PC-9 (cell line): ENCODE measurements at regions of chr11 and their contacts with region 1.

Region 1: GRCh38 chr11:86208572-86208971 is 36.0 kb upstream of the EED start:
- DNase-seq: no peak
- H3K4me3 ChIP-seq: no peak overlapping the region
- H3K27ac ChIP-seq: no peak overlapping the region
- H3K4me1 ChIP-seq: 0 out of 2 replicates have a peak, but pooled peaks cover 5% of the 10 kb centered on the region
- H3K27me3 ChIP-seq: no peaks in the 10 kb centered on the region
- CTCF ChIP-seq: no peak

Region 2: GRCh38 chr11:86174101-86175046 is 34.2 kb before region 1 on chr11:
- CTCF ChIA-PET with region 1: no interaction called
- POLR2A ChIA-PET with region 1: interaction called, 15 read pairs
- intact Hi-C with region 1: no loop called
- DNase-seq: peak; percentile 80 to 98
- H3K4me3 ChIP-seq: no peak overlapping the region
- H3K27ac ChIP-seq: peak overlapping the region; percentile 79
- H3K4me1 ChIP-seq: peaks cover 62% of the 10 kb centered on the region
- H3K27me3 ChIP-seq: no peaks in the 10 kb centered on the region
- CTCF ChIP-seq: no peak

Region 3: DNA sequence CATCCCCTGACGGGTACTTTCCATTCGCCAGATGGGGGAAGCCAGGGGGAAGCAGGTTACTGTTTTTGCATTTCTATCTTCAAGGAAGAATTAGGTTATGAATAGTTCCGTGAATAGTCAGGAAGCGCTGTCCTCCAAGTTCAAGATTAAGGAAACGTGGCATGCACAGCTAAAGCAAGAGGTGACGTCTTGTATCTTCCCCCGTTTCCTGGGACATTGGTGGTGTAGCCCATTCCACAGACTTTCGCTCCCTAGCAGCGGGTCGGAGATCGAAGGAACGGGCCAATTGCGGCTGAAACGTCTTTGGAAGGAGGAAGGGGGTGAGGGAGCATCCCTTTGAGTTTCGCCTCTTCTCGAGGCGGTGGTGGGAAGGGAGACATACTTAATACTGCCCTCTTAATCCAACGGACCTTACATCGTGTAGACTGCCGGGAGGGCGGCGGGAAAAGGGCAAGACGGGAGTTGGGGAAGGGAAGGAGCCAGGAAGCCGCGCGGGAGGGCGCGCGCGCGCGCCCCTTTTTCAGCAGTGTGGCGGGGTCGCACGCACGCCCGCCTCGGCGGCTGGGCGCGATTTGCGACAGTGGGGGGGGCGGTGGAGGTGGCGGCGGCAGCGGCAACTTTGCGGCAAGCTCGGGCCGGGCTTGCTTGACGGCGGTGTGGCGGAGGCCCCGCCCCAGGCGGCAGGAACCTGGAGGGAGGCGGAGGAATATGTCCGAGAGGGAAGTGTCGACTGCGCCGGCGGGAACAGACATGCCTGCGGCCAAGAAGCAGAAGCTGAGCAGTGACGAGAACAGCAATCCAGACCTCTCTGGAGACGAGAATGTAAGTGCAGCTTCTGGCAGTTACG is 36.2 kb after region 1 on chr11 and contains the start of gene EED:
- CTCF ChIA-PET with region 1: no interaction called
- POLR2A ChIA-PET with region 1: no interaction called
- intact Hi-C with region 1: no loop called
- DNase-seq: peak; percentile 93 to 94
- H3K4me3 ChIP-seq: peak within 1 kb of the TSS; percentile 67
- H3K27ac ChIP-seq: peak within 1 kb of the TSS; percentile 92
- H3K4me1 ChIP-seq: peaks cover 45% of the 10 kb centered on the region
- H3K27me3 ChIP-seq: no peaks in the 10 kb centered on the region
- CTCF ChIP-seq: 0 out of 2 replicates have a peak, but pooled peaks have one; percentile 18
- total RNA-seq, gene EED: 33.4 and 37.4 TPM in 2 replicates